Common myeloid progenitor, CD34-positive (primary cell): ENCODE measurements at regions of chr2 and their contacts with region 1.

Region 1: GRCh38 chr2:660586-661359 is 16.4 kb downstream of the TMEM18 start:
- DNase-seq: no peak
- H3K4me3 ChIP-seq: no peak overlapping the region
- H3K27ac ChIP-seq: no peak overlapping the region
- H3K4me1 ChIP-seq: peaks cover 0 to 16% (median 14%) of the 10 kb centered on the region in 4 experiments
- H3K27me3 ChIP-seq: peaks cover 0 to 1% (median 0%) of the 10 kb centered on the region in 5 experiments

Region 2: GRCh38 chr2:673615-674320 is 13.0 kb after region 1 on chr2:
- CTCF ChIA-PET with region 1: interaction called, 14 read pairs
- POLR2A ChIA-PET with region 1: no interaction called
- DNase-seq: no peak
- H3K4me3 ChIP-seq: no peak overlapping the region
- H3K27ac ChIP-seq: no peak overlapping the region
- H3K4me1 ChIP-seq: peaks cover 0 to 25% (median 14%) of the 10 kb centered on the region in 4 experiments
- H3K27me3 ChIP-seq: no peaks in the 10 kb centered on the region

Region 3: DNA sequence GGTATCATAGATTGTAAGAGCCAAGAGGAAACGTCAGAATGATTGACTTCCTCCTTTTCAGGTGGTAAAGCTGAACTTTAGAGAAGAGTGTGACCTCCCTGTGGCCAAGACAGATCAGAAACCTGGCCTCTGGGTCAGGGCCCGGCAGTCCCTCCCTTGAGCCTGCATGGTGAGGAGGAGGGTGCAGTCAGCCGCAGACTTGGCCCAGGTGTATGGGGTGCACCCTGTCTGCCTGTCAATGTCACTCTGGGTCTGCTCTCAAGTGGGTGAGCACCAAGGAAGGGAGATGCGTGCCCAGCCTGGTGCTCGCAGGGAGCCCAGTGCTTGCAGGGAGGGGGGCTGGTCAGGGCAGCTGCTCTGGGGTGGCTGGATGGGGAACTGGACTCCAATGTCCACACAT is 155.5 kb after region 1 on chr2:
- CTCF ChIA-PET with region 1: no interaction called
- POLR2A ChIA-PET with region 1: no interaction called
- DNase-seq: no peak
- H3K4me3 ChIP-seq: no peak overlapping the region
- H3K27ac ChIP-seq: no peak overlapping the region
- H3K4me1 ChIP-seq: no peaks in the 10 kb centered on the region
- H3K27me3 ChIP-seq: no peaks in the 10 kb centered on the region